ENCODE measurements at regions of chr18 and their contacts with region 1.

Region 1: GRCh38 chr18:11518788-11519685 is 90.4 kb upstream of the SLC35G4 start:
- DNase-seq: peak; percentile 80
- CTCF ChIP-seq: peak; percentile 86

Region 2: GRCh38 chr18:11149441-11150270 is 369.4 kb before region 1 on chr18 and contains the start of gene PIEZO2:
- CTCF ChIA-PET with region 1: no interaction called
- POLR2A ChIA-PET with region 1: no interaction called
- DNase-seq: peak; percentile 92
- CTCF ChIP-seq: no peak

Region 3: DNA sequence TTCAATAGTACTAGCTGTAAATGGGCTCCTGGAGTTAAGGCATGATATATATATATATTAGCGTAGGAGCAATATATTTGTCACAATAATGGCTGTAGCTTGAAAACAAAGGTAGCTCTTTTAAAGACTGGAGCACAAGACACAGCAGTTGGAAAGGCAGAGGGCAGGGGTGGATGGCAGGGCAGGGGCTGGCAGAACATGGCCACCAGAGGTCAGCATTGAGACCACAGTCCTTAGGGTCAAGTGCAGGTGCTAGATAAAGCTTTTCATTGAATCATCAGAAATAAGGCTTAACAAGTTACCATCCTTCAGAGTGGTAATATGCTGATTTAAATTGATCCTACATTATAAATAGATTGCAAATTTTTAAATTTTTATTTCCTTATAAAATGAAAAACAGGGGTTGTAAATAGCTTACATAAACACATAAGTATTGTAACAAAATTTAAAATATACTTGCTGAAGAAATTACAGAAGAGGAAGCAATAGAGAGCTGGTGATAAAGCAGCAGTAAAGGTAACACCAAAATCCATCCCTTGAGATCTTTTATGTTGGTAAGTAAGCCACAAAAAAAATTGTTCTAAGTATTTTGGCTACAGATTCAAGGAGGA is 208.5 kb before region 1 on chr18:
- CTCF ChIA-PET with region 1: interaction called, 43 read pairs
- POLR2A ChIA-PET with region 1: no interaction called
- DNase-seq: peak; percentile 46
- CTCF ChIP-seq: peak; percentile 75

Region 4: DNA sequence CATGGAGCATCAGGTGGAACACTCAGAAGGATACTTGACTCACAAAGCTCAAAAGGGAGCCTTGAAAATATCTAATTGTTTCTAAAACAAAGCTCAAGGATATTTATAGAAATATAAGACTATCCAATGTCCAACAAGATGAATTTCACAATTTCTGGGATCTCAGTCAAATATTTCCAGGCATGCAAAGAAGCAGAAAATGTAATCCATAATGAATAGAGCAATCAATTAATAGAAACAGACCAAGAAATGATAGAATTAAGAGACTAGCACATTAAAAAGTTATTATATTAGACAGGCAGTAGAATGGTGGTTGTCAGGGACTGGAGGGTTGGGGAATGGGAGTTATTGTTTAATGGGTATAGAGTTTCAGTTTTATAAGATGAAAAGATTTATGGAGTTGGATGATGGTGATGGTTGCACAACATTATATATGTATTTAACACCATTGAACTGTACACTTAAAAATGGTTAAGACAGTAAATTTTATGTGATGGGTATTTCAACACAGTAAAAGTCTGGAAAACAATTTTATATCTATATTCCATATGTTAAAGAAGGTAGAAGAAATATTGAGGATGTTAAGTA is 179.8 kb before region 1 on chr18:
- CTCF ChIA-PET with region 1: no interaction called
- POLR2A ChIA-PET with region 1: no interaction called
- DNase-seq: no peak
- CTCF ChIP-seq: no peak

Region 5: DNA sequence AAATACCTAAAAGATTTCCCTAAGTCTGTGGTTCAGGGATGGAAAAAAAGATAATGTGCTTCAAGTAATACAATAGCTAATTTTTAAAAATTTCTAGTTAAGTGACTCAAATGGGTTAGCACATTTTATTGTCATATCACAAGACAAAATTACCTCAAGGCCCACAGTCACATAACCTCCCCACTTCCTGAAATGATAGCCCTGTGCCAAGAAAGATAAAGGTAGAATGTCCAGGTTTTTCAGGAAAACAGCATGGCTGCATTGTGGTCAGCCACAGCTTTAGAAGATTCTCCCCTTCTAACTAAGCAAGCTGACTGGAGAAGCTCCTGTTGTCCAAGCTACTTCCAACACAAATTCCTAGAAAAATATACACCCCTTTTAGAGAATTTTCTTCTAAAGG is 36.8 kb before region 1 on chr18:
- CTCF ChIA-PET with region 1: interaction called, 12 read pairs
- POLR2A ChIA-PET with region 1: no interaction called
- DNase-seq: no peak
- CTCF ChIP-seq: no peak

Region 6: GRCh38 chr18:11500153-11501122 is 18.6 kb before region 1 on chr18:
- CTCF ChIA-PET with region 1: interaction called, 20 read pairs
- POLR2A ChIA-PET with region 1: no interaction called
- DNase-seq: no peak
- CTCF ChIP-seq: no peak

Region 7: DNA sequence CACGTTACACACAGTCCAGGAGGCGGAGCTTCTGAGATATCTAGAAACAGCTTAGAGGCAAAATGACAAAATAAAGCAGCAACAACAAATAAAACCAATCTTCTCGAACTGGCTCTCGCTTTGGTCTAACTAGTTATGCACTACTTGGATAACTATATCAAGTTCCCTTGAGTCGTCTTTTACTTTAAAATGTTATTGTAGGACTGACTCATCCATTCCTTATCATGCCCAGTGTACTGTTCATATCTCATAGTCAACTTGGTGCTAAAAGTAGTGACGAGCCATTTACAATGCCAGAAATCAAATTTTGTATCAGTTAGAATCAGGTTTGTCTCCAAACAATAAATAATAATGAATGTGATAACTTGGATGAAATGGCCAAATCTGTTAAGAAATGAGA is 12.2 kb before region 1 on chr18:
- CTCF ChIA-PET with region 1: interaction called, 20 read pairs
- POLR2A ChIA-PET with region 1: no interaction called
- DNase-seq: no peak
- CTCF ChIP-seq: no peak

Measured in GM10248 (cell line).